ENCODE measurements at regions of chr1 and their contacts with region 1.

Region 1: GRCh38 chr1:21368515-21369289 is 71.2 kb upstream of the NBPF3 start:
- DNase-seq: peak; percentile 87
- H3K4me3 Mint-ChIP-seq: no peak overlapping the region
- H3K27ac Mint-ChIP-seq: peak overlapping the region; percentile 13
- H3K4me1 Mint-ChIP-seq: peaks cover 10% of the 10 kb centered on the region
- H3K27me3 Mint-ChIP-seq: no peaks in the 10 kb centered on the region

Region 2: DNA sequence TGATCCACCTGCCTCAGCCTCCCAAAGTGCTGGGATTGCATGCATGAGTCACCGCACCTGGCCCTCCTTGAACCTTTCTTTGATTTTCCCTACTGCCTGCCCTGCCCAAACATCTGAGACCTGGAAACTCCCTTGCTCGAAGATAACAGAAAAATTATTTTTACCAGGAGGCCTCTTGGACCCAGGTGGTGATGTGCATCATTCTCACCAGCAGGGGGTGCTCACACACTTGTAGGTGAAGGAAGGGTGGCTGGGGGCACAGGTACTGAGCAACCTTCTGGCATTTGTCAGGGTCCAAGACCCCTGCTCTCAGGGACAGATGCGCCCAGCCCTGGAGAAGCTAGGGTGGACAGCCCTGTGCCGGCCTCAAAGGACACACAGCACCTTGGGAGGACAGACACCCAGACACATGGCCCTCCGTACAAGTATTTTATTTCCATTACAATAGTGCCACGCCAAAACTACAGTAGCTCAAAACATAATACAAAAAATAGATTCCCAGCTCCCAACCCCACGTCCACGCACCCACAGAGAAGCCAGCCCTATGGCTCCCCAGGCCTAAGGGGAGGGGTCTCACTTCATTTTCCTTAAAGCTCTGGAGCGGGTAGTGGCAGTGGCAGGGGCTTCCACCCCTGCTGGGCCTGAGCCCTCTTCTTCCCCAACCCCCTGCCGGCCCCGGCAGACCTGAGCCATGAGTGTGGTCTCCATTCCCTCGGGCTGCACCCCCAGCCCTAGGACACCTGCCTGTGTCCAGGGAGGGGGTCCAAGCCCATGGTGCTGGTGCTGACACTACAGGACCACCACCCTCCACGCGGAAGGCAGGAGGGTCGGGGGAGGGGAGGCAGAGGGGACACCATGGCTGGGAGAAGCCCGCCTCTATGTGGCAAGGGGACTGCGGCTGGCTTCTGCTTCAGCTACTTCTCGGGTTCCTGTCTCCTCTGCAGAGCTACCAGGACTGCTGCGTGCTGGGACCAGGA is 151.6 kb before region 1 on chr1:
- intact Hi-C with region 1: loop called (anchors 1 kb)
- DNase-seq: peak; percentile 90
- H3K4me3 Mint-ChIP-seq: no peak overlapping the region
- H3K27ac Mint-ChIP-seq: no peak overlapping the region
- H3K4me1 Mint-ChIP-seq: peaks cover 3% of the 10 kb centered on the region
- H3K27me3 Mint-ChIP-seq: no peaks in the 10 kb centered on the region

Region 3: DNA sequence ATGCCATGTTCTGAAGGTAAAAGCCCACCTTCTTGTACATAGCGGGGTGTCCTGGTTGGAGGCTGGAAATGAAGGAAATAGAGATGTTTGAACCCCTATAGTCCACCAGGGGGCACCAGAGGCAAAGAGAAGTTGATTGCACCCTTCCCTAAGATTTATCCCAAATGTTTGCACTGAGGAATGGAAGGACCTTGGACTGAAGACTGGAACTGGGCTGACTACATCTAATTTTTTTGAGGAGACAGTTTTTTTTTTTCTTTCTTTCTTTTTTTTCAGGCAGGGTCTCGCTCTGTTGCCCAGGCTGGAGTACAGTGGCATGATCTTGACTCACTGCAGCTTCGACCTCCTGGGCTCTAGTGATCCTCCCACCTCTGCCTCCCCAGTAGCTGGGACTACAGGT is 136.7 kb before region 1 on chr1:
- intact Hi-C with region 1: loop called (anchors 1 kb)
- DNase-seq: peak; percentile 76
- H3K4me3 Mint-ChIP-seq: no peak overlapping the region
- H3K27ac Mint-ChIP-seq: no peak overlapping the region
- H3K4me1 Mint-ChIP-seq: no peaks in the 10 kb centered on the region
- H3K27me3 Mint-ChIP-seq: no peaks in the 10 kb centered on the region

Region 4: GRCh38 chr1:21255278-21255942 is 113.3 kb before region 1 on chr1:
- intact Hi-C with region 1: loop called (anchors 1 kb)
- DNase-seq: peak; percentile 94
- H3K4me3 Mint-ChIP-seq: no peak overlapping the region
- H3K27ac Mint-ChIP-seq: peak overlapping the region; percentile 82
- H3K4me1 Mint-ChIP-seq: peaks cover 31% of the 10 kb centered on the region
- H3K27me3 Mint-ChIP-seq: no peaks in the 10 kb centered on the region

Region 5: GRCh38 chr1:21384620-21385019 is 15.9 kb after region 1 on chr1:
- intact Hi-C with region 1: loop called (anchors 1 kb)
- DNase-seq: no peak
- H3K4me3 Mint-ChIP-seq: no peak overlapping the region
- H3K27ac Mint-ChIP-seq: no peak overlapping the region
- H3K4me1 Mint-ChIP-seq: peaks cover 2% of the 10 kb centered on the region
- H3K27me3 Mint-ChIP-seq: peaks cover 19% of the 10 kb centered on the region

Region 6: GRCh38 chr1:21414015-21414414 is 45.3 kb after region 1 on chr1:
- intact Hi-C with region 1: no loop called
- DNase-seq: no peak
- H3K4me3 Mint-ChIP-seq: no peak overlapping the region
- H3K27ac Mint-ChIP-seq: no peak overlapping the region
- H3K4me1 Mint-ChIP-seq: no peaks in the 10 kb centered on the region
- H3K27me3 Mint-ChIP-seq: peaks cover 33% of the 10 kb centered on the region